Caco-2 (cell line): ENCODE measurements at regions of chr17 and their contacts with region 1.

Region 1: DNA sequence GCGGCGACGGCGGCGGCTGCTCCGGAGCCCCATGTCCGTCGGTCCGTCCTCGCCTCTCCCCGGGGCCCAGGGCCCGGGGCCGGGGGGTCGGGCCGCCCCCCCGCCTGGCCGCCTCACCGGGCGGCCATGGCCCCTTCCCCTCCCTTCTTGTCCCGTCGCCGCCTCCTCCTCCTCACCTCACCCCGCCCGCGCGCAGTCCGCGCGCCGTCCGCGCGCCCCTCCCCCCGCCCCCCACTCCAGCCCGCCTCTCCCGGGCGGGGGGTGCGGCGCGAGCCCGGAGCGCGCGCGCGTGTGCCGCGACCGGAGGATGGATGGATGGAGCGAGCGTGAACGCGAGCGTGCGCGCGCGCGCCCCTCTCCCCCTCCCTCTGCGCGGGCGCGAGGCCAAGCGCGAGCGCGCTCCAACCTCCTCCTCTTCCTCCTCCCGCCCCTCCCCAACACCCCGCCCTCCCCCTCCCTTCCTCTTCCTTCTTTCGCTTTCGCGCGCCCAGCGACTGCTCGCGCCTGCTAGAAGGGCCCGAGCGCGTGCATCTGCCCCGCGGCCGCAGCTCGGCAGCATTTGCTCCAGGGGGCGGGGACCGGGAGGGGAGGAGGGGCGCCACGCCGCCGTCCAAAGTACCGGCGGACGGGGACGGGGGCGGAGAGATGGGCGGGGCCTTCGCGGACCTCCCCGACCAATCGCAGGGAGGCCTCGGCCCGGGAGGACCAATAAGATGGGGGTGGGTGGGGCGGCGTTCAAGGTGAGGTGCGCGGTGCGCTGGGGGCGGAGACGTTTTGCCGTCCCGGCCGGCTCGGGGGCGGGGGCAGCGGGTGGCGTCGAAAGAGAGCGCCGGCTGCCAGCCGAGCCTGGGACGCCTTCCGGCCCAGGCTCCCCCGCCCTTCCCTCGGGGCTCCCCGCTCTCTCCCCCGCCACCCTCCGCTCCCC is at the start of gene ATXN7L3:
- DNase-seq: peak; percentile 99 to 100
- H3K4me3 ChIP-seq: peak within 1 kb of the TSS; percentile 91
- H3K4me3 Mint-ChIP-seq: peak within 1 kb of the TSS; percentile 96
- H3K27ac Mint-ChIP-seq: peak within 1 kb of the TSS; percentile 93
- H3K4me1 ChIP-seq: peaks cover 14% of the 10 kb centered on the region; the same call in 1 of the 2 replicates
- H3K4me1 Mint-ChIP-seq: peaks cover 26% of the 10 kb centered on the region
- H3K27me3 ChIP-seq: no peaks in the 10 kb centered on the region
- H3K27me3 Mint-ChIP-seq: no peaks in the 10 kb centered on the region
- CTCF ChIP-seq: no peak
- total RNA-seq, gene ATXN7L3: 91.2 and 92.0 TPM in 2 replicates

Region 2: DNA sequence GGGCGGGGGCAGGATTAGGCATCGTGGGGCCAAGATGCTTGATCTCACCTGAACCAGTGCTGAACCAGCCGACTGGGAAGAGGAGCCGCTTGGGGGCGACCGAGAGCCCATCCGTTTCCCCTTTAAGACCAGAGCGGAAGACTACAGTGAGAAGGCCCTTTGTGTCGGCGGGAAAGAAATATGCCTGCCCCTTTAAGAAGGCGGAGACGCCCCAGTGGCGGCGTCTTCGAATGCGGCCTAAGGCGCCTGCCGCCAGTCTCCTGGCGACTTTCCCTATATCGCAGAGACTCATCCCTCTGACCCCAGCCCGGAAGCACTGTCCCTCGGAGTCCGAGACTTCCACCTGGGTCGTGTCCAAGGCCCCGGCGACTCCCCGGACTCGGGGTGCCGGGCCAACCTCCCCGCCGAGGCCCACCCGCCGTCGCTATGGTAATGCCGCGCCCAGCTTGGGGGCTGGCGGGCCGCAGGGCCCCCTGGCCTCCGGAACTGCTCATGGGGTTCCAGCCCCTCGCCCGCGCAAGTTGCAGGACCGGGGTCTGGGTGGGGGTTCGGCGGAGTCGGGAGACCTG is 58.0 kb before region 1 on chr17 and contains the start of gene HROB:
- CTCF ChIA-PET with region 1: no interaction called
- POLR2A ChIA-PET with region 1: no interaction called
- intact Hi-C with region 1: loop called (anchors 1 kb)
- DNase-seq: peak; percentile 98 to 99
- H3K4me3 ChIP-seq: peak within 1 kb of the TSS; percentile 66
- H3K4me3 Mint-ChIP-seq: peak within 1 kb of the TSS; percentile 91
- H3K27ac Mint-ChIP-seq: peak within 1 kb of the TSS; percentile 95
- H3K4me1 ChIP-seq: peaks cover 18% of the 10 kb centered on the region
- H3K4me1 Mint-ChIP-seq: peaks cover 11% of the 10 kb centered on the region
- H3K27me3 ChIP-seq: no peaks in the 10 kb centered on the region
- H3K27me3 Mint-ChIP-seq: no peaks in the 10 kb centered on the region
- CTCF ChIP-seq: peak; percentile 95 to 97
- total RNA-seq, gene HROB: 15.2 and 17.0 TPM in 2 replicates

Region 3: GRCh38 chr17:44186307-44187130 is 13.3 kb before region 1 on chr17 and contains the start of gene TMUB2:
- CTCF ChIA-PET with region 1: interaction called, 4 read pairs
- POLR2A ChIA-PET with region 1: interaction called, 11 read pairs
- intact Hi-C with region 1: loop called (anchors 1 kb)
- DNase-seq: peak; percentile 99 to 100
- H3K4me3 ChIP-seq: peak within 1 kb of the TSS; percentile 91
- H3K4me3 Mint-ChIP-seq: peak within 1 kb of the TSS; percentile 90
- H3K27ac Mint-ChIP-seq: peak within 1 kb of the TSS; percentile 91
- H3K4me1 ChIP-seq: peaks cover 10% of the 10 kb centered on the region; the same call in 1 of the 2 replicates
- H3K4me1 Mint-ChIP-seq: peaks cover 8% of the 10 kb centered on the region
- H3K27me3 ChIP-seq: no peaks in the 10 kb centered on the region
- H3K27me3 Mint-ChIP-seq: no peaks in the 10 kb centered on the region
- CTCF ChIP-seq: no peak
- total RNA-seq, gene TMUB2: 28.4 and 30.3 TPM in 2 replicates

Region 4: GRCh38 chr17:44331249-44331760 is 131.5 kb after region 1 on chr17:
- CTCF ChIA-PET with region 1: interaction called, 11 read pairs
- POLR2A ChIA-PET with region 1: interaction called, 6 read pairs
- intact Hi-C with region 1: loop called (anchors 2 kb)
- DNase-seq: peak; percentile 81 to 89
- H3K4me3 ChIP-seq: no peak overlapping the region
- H3K4me3 Mint-ChIP-seq: no peak overlapping the region
- H3K27ac Mint-ChIP-seq: no peak overlapping the region
- H3K4me1 ChIP-seq: peaks cover 8% of the 10 kb centered on the region
- H3K4me1 Mint-ChIP-seq: no peaks in the 10 kb centered on the region
- H3K27me3 ChIP-seq: no peaks in the 10 kb centered on the region; the same call in 1 of the 2 replicates
- H3K27me3 Mint-ChIP-seq: no peaks in the 10 kb centered on the region
- CTCF ChIP-seq: peak; percentile 65 to 87